ENCODE measurements at regions of chr12 and their contacts with region 1.

Region 1: GRCh38 chr12:96303653-96304052 is 96.6 kb downstream of the CDK17 start:
- DNase-seq: no peak
- ATAC-seq: peak in 1 of 4 donors; percentile 64
- H3K4me3 ChIP-seq: no peak overlapping the region
- H3K27ac ChIP-seq: no peak overlapping the region
- H3K4me1 ChIP-seq: peaks cover 0 to 17% (median 0%) of the 10 kb centered on the region in 12 donors
- H3K27me3 ChIP-seq: no peaks in the 10 kb centered on the region
- CTCF ChIP-seq: peak in 3 of 12 donors; percentile 11 to 40 (median 23)
- POLR2A ChIP-seq: no peak

Region 2: DNA sequence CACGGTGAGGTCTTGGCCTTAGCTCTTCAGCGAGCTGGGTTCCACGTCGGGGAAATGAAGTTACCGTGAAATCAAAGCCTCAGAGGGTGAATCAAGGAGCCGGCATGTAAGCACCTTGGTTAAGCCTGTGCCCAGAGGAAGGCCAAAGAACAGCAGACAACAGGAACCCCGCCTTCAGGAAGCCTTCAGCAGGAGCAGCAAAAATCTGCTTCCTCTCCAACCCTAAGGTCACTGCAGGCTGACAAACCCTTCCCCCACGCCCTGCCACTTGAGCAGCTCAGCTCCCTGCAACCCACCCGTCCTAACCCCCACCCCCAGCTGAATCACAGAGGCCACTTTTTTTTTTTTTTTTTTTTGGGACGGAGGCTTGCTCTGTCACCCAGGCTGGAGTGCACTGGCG is 195.3 kb before region 1 on chr12:
- intact Hi-C with region 1: no loop called
- DNase-seq: peak; percentile 66 to 75 (median 72)
- ATAC-seq: peak; percentile 49 to 91 (median 88)
- H3K4me3 ChIP-seq: peak overlapping the region in 3 of 12 donors; percentile 8 to 18 (median 13)
- H3K27ac ChIP-seq: peak overlapping the region; percentile 48 to 88 (median 76)
- H3K4me1 ChIP-seq: peaks cover 0 to 24% (median 8%) of the 10 kb centered on the region in 12 donors
- H3K27me3 ChIP-seq: no peaks in the 10 kb centered on the region
- CTCF ChIP-seq: no peak
- POLR2A ChIP-seq: no peak

Region 3: GRCh38 chr12:96350982-96351381 is 47.3 kb after region 1 on chr12:
- intact Hi-C with region 1: loop called in 1 of 10 experiments (anchors 10 kb)
- DNase-seq: no peak
- ATAC-seq: peak in 1 of 4 donors; percentile 49
- H3K4me3 ChIP-seq: no peak overlapping the region
- H3K27ac ChIP-seq: peak overlapping the region in 1 of 12 donors; percentile 54
- H3K4me1 ChIP-seq: peaks cover 0 to 79% (median 30%) of the 10 kb centered on the region in 12 donors
- H3K27me3 ChIP-seq: no peaks in the 10 kb centered on the region
- CTCF ChIP-seq: no peak
- POLR2A ChIP-seq: no peak

Region 4: DNA sequence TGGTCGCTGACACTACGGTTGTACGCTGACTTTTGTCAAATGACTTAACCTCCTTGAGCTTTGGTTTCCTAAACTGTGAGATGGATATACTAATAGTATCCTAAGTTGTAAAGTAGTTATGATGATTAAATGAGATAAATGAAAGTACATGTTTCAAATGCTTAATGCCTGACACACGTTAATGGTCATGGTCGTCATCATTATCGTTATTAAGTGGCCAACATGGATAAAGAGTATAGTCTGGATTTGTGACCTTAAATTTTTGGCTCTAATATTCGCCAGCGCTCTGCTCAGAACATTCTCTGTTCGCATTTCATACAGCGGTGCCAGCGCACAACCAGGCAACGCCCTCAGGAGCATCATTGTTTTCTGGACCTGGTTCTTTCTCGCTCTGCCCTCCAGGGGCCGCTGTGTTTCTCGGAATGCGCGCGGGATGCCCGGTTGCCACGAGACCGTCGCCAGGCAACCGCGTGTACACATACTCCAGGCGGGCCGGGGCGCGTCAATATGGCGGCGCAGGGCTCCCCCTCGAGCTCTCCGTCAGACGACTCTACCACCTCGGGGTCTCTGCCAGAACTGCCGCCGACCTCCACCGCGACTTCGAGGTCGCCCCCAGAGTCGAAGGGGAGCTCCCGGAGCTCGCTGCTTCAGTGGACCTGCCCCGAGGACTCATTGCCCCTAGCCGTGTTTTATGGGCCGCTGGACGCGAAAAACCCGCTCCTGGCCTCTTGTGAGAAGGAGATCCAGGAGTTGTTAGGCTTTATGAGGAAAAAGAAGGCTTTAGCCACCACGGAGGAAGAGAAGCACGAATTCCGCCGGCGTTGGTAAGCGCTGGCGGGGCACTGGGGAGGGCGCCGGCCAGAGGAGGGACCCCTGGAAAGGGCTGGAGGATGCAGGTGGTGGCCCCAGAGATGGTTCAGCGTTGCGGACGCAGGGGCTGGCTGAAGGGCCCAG is 185.7 kb after region 1 on chr12 and contains the start of gene CFAP54:
- intact Hi-C with region 1: loop called in 1 of 10 experiments (anchors 10 kb)
- DNase-seq: peak; percentile 92 to 96 (median 94)
- ATAC-seq: peak; percentile 86 to 99 (median 99)
- H3K4me3 ChIP-seq: peak within 1 kb of the TSS; percentile 48 to 82 (median 64)
- H3K27ac ChIP-seq: peak within 1 kb of the TSS in 6 of 12 donors; percentile 7 to 81 (median 38)
- H3K4me1 ChIP-seq: peaks cover 0 to 20% (median 3%) of the 10 kb centered on the region in 12 donors
- H3K27me3 ChIP-seq: no peaks in the 10 kb centered on the region
- CTCF ChIP-seq: peak; percentile 73 to 93 (median 88)
- POLR2A ChIP-seq: no peak
- total RNA-seq, gene CFAP54: 0.07 to 0.79 (median 0.16) TPM in 8 of 9 donors, not detected in the other

Region 5: GRCh38 chr12:96766232-96766631 is 462.6 kb after region 1 on chr12:
- intact Hi-C with region 1: no loop called
- DNase-seq: no peak
- ATAC-seq: no peak
- H3K4me3 ChIP-seq: no peak overlapping the region
- H3K27ac ChIP-seq: no peak overlapping the region
- H3K4me1 ChIP-seq: no peaks in the 10 kb centered on the region
- H3K27me3 ChIP-seq: no peaks in the 10 kb centered on the region
- CTCF ChIP-seq: no peak
- POLR2A ChIP-seq: no peak

Measured in heart left ventricle (tissue), 16 donors.